K562 (cell line): ENCODE measurements at regions of chr1 and their contacts with region 1.

Region 1: DNA sequence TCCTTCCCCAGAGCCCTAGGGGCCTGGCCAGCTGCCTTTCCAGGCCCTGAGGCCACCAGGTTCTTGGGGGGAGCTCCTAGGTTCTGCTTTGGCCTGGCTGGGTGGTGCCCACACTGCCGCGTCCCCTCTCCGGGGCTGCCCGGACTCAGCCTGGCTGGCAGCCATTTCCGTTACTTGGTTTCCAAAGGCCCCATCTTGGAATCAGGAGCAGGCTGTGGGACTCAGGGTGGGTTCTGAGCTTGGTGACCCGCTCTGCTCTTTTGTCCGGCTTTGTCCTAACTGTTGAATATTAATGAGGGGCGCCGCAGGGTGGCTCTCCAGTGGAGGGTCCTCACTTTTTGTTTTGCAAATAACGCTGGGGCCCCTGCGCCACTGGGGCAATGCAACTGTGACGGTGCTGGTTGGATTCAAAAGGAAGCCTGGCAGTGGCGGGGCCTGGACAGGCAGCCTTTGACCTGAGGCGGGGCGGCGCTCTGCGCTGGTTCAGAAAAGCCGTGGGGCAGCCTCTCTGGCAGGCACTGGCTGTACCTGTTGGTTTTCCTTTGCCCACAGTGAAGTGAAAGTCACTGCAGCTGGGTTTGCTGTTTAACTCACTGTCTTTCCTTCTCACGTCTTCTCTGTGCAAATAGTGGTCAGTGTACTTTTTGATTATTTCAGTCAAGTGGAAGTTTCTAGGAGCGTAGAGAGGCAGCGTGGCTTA is 20.2 kb downstream of the SKI start:
- DNase-seq: no peak
- ATAC-seq: no peak
- H3K4me3 ChIP-seq: no peak overlapping the region
- H3K27ac ChIP-seq: no peak overlapping the region
- H3K4me1 ChIP-seq: peaks cover 0 to 52% of the 10 kb centered on the region in 2 experiments; a peak in 2 of 5 replicates
- H3K27me3 ChIP-seq: no peaks in the 10 kb centered on the region
- CTCF ChIP-seq: no peak
- EP300 ChIP-seq: no peak
- POLR2A ChIP-seq: no peak
- RAD21 ChIP-seq: no peak

Region 2: DNA sequence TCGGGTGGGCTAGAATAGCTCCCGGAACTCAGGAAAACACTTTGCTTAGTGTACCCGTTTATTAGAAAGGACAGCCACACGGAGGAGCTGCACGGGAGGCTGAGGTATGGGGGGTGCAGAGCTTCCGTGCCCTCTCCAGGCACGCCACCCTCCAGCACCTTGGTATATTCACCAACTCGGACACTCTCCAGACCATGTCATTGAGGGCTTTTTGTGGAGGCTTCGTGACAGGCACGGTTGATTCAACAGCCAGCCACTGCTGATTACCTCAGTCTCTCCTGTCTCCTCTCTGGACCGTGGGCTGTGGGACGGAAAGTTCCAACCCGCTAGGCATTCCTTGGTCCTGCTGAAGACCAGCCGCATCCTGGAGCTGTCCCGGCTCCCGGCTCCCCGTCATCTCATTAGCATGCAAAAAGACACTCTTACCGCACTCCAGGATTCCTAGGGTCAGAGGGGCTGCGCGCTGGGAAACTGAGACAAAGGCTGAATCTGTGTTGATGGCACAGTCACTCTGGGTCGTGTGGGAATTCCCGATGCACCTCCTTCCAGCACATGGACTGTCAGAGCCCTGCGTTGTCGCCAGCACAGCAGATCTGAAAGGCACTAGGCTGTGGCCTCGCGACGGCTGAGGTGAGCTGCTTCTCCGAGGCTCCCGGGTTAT is 132.5 kb before region 1 on chr1:
- CTCF ChIA-PET with region 1: no interaction called
- POLR2A ChIA-PET with region 1: no interaction called
- in situ Hi-C with region 1: no loop called
- intact Hi-C with region 1: no loop called
- DNase-seq: no peak
- ATAC-seq: no peak
- H3K4me3 ChIP-seq: no peak overlapping the region
- H3K27ac ChIP-seq: no peak overlapping the region
- H3K4me1 ChIP-seq: peaks cover 0 to 20% of the 10 kb centered on the region in 2 experiments; a peak in 2 of 5 replicates
- H3K27me3 ChIP-seq: peaks cover 54 to 62% of the 10 kb centered on the region in 2 experiments
- CTCF ChIP-seq: no peak
- EP300 ChIP-seq: no peak
- POLR2A ChIP-seq: no peak
- RAD21 ChIP-seq: no peak

Region 3: DNA sequence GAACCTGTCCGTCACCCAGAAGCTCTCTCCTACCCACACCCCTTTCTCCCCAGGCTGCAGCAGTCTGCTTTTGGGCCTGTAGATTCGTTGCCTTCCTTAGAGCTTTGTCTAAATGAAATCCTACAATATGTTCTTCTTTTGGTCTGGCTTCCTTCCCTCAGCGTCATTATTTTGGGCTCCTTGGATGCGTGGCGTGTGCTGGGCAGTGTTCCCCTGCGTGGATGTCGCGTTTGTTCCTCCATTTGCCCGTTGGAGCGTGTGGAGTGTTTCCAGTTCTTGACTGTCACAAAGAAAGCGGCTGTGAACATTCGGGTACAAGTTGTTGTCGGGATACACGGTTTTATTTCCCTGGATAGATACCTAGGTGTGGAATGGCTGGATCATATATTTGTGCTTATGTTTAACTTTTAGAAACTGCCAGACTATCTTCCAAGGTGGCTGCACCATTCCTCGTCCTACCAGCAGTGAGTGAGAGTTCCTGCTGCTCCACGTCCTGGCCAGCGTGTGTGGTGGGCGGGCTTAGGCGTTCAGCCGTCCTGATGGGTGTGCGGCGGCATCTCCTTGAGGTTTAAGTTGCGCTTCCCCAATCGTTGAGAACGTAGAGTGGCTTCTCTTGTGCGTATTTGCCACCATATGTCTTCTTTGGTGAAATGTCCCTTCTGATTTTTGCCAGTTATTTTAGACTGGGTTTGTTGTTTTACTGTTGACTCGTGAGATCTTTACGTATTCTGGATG is 11.6 kb after region 1 on chr1:
- CTCF ChIA-PET with region 1: no interaction called
- POLR2A ChIA-PET with region 1: no interaction called
- in situ Hi-C with region 1: no loop called
- intact Hi-C with region 1: no loop called
- DNase-seq: no peak
- ATAC-seq: 0 out of 3 replicates have a peak, but pooled peaks have one; percentile 13
- H3K4me3 ChIP-seq: no peak overlapping the region
- H3K27ac ChIP-seq: no peak overlapping the region
- H3K4me1 ChIP-seq: peaks cover 20 to 29% of the 10 kb centered on the region in 2 experiments
- H3K27me3 ChIP-seq: no peaks in the 10 kb centered on the region
- CTCF ChIP-seq: no peak
- EP300 ChIP-seq: no peak
- POLR2A ChIP-seq: no peak
- RAD21 ChIP-seq: no peak

Region 4: DNA sequence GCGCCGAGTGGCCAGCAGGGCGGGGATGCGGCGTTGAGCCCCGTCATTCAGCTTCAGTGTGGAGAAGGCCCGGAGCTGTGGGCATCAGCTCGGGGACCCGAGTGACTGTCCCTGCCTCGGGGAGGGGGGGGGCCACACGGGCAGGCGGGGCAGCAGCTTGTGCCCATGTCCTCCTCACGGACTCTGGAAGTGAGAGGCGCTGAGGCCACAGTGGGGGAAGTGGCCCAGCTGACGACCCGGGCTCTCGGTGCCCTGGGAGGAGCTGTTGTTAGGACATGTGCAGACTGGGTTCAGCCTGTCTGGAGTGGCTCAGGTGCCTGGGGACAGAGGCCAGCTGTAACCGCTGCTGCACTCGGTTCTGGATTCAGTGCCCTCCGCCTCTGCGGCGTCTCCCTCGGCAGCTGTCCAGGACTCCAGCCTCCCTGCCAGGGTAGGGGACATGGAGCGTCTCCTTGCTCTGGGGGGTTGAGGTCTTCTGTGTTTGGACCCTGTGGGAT is 50.9 kb after region 1 on chr1:
- CTCF ChIA-PET with region 1: no interaction called
- POLR2A ChIA-PET with region 1: no interaction called
- in situ Hi-C with region 1: loop called (anchors 5 kb)
- intact Hi-C with region 1: no loop called
- DNase-seq: no peak
- ATAC-seq: no peak
- H3K4me3 ChIP-seq: no peak overlapping the region
- H3K27ac ChIP-seq: no peak overlapping the region
- H3K4me1 ChIP-seq: peaks cover 0 to 75% of the 10 kb centered on the region in 2 experiments; a peak in 3 of 5 replicates
- H3K27me3 ChIP-seq: no peaks in the 10 kb centered on the region
- CTCF ChIP-seq: no peak
- EP300 ChIP-seq: no peak
- POLR2A ChIP-seq: no peak
- RAD21 ChIP-seq: no peak